Activated T-helper 1 cell treated with anti-CD3 and anti-CD28 coated beads, Interleukin-12 subunit alpha, Interleukin-12 subunit beta, Interleukin-2, Interleukin-4 antibody, amounts not matched to agents 30 ng/mL and 10 ng/mL and 1 ng/mL, durations not matched to agents 14 hours and 24 hours and 36 hours (primary cell): ENCODE measurements at regions of chr11 and their contacts with region 1.

Region 1: DNA sequence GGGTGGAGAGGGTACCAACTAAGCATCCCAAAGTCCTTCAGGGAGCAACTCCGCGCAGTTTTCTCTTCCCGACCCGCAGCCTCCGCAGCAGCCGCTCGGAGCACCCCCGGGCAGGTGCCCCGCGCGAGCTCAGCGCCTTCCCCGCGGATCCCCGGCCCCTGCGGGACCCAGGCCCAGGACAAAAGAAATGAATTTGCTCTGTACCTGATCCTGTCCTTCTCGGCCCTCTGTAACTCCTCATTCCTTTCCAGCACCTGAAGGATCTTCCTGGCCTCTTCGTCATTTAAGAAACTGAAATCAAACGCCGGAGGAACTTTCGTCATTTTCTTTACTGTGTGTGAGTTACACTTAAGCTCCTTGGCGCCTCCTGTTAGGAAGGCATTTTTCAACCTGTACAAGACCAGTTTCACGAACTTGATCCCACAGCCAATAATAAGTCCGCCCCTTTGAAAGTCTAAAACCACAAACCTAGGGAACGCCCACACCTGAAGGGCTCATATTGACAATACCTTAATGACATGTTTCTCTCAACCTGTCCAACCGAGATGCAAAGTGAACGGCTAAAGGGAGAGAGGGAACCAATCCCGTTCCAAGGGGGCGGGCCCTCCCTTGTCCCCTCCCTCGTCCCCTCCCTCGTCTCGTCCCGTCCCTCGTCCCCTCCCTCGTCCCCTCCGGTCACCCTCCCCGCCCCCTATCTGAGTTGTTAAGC is at the start of gene EXPH5:
- DNase-seq: peak; percentile 76
- H3K4me3 Mint-ChIP-seq: peak within 1 kb of the TSS; percentile 89
- H3K27ac Mint-ChIP-seq: peak within 1 kb of the TSS; percentile 75
- H3K4me1 Mint-ChIP-seq: peaks cover 23% of the 10 kb centered on the region
- H3K27me3 Mint-ChIP-seq: peaks cover 29% of the 10 kb centered on the region
- total RNA-seq, gene EXPH5: 0.56 and 0.65 TPM in 2 replicates

Region 2: GRCh38 chr11:108121274-108122155 is 471.9 kb before region 1 on chr11 and contains the start of gene ACAT1:
- intact Hi-C with region 1: loop called (anchors 2 kb)
- DNase-seq: peak; percentile 95
- H3K4me3 Mint-ChIP-seq: peak within 1 kb of the TSS; percentile 97
- H3K27ac Mint-ChIP-seq: peak within 1 kb of the TSS; percentile 82
- H3K4me1 Mint-ChIP-seq: peaks cover 36% of the 10 kb centered on the region
- H3K27me3 Mint-ChIP-seq: no peaks in the 10 kb centered on the region
- total RNA-seq, gene ACAT1: 52.8 and 56.8 TPM in 2 replicates

Region 3: DNA sequence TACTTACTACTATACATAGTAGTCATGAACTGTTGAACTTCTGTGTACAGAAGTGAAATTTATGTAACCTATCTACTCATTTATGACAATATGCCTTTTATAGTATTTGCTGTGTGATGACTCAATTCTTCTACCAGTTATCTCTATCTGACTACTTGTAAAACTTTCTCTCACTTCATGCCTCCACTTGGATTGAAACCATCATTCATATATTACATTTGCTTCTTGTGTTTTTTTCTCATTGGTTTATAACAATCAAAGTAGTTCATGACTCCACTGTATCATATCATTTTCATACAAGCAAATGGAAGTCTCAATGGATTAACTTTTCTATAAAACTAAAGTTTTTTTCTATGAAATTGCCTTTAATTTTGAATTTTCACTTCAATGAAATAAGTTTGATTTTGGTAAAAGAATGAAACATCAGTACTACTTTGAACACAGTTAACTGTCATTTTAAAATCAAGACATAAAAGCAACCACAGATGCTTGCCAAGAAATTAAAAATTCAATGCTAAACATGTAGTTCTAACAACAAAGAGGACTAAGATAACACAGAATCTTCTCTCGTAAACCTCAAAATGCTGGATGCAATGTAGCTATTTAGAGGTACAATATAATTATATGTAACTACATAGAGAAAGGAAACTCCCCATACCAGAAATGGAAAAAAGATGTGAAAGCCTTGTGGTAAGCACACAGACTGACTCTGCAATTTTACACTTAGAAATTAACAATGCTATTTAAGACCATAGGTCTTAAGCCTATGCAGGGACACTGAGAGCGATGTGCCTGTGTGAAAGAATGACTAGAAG is 27.8 kb after region 1 on chr11:
- intact Hi-C with region 1: loop called (anchors 1 kb)
- DNase-seq: no peak
- H3K4me3 Mint-ChIP-seq: no peak overlapping the region
- H3K27ac Mint-ChIP-seq: no peak overlapping the region
- H3K4me1 Mint-ChIP-seq: peaks cover 18% of the 10 kb centered on the region
- H3K27me3 Mint-ChIP-seq: peaks cover 7% of the 10 kb centered on the region